Heart left ventricle (tissue), 16 donors: ENCODE measurements at regions of chr4 and their contacts with region 1.

Region 1: DNA sequence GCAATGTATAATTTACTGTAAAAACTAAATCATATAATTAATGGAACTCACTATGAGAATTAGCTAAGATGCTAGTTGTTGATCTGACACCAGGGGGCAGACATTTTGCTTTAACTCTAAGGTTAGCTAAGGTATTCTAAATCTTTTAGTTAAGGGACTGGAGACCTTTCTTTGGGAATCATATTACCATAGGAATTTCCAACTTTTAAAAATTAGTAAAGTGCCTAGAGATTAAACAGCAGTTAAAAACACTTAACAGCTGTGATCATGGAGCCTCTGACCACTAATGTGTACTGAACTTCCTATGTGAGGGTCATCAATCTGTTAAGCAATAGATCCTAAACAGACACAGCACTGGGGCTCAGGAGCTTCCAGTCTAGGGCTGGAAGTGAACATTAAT is 226.6 kb downstream of the NSUN7 start:
- DNase-seq: peak in 1 of 5 donors; percentile 52
- ATAC-seq: peak in 2 of 4 donors; percentile 52 to 63
- H3K4me3 ChIP-seq: no peak overlapping the region
- H3K27ac ChIP-seq: no peak overlapping the region
- H3K4me1 ChIP-seq: peaks cover 0 to 7% (median 0%) of the 10 kb centered on the region in 12 donors
- H3K27me3 ChIP-seq: no peaks in the 10 kb centered on the region
- CTCF ChIP-seq: peak; percentile 63 to 87 (median 75)
- POLR2A ChIP-seq: no peak

Region 2: DNA sequence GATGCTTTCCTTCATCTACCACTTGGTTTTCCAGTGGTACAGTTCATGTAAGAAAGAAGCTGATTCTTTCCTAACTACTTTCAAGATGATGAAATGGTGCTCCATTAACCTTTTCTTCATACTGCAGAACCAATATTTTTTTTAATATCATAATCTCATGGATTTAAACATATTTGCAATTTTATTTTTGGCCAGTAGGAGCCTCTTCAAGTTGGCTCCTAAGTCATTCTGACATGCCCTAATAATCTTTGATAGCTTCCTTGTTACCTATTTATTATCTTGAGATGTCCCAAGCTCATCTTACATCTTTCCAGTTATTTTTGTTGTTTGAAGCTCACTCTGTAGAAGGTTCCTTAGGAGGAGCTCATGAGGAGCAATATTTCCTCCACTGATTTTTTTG is 67.8 kb after region 1 on chr4:
- intact Hi-C with region 1: loop called in 2 of 10 experiments (anchors 10 kb)
- DNase-seq: no peak
- ATAC-seq: no peak
- H3K4me3 ChIP-seq: no peak overlapping the region
- H3K27ac ChIP-seq: no peak overlapping the region
- H3K4me1 ChIP-seq: peaks cover 0 to 19% (median 0%) of the 10 kb centered on the region in 12 donors
- H3K27me3 ChIP-seq: no peaks in the 10 kb centered on the region
- CTCF ChIP-seq: peak in 4 of 12 donors; percentile 6 to 32 (median 11)
- POLR2A ChIP-seq: no peak